Activated T-helper 1 cell treated with anti-CD3 and anti-CD28 coated beads, Interleukin-12 subunit alpha, Interleukin-12 subunit beta, Interleukin-2, Interleukin-4 antibody, amounts not matched to agents 30 ng/mL and 10 ng/mL and 1 ng/mL, durations not matched to agents 14 hours and 24 hours and 36 hours (primary cell): ENCODE measurements at regions of chr4 and their contacts with region 1.

Region 1: DNA sequence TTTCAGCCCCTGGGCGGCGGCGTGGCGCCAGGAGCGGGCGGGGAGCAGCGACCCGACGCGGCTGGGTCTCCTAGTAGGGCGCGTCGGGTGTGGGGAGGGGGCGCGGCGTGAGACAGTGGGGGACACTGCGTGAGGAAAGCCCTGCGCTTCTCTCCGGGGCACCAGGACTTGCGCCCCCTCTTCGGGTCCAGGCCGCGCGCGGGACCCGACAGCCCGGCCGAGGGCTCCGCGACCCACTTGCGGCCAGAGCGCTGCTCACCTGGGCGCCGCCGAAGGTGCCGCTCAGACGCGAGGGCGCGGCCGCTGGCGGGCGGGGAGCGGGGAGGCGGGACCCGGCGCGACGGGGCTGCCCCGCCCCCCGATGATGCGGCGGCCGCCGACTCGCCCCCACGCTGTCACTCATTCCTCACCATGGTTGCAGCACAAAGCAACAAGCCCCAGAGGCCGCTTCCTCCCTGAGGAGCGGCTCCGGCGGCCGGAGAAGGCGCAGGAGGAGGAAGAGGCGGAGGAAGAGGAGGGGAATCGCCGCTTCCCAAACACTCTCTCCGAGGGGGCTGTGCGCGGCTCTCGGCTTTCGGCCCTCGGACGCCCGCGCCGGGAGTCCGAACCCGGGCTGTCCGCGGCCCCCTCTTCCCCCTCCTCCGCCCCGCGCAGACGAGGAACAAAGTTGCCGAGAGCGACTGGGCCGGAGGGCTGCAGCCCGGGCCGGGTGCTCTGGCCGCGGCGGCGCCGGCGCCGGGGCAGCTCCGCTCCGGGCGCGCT is at the start of gene RAPGEF2:
- DNase-seq: peak; percentile 86
- H3K4me3 Mint-ChIP-seq: peak within 1 kb of the TSS; percentile 85
- H3K27ac Mint-ChIP-seq: peak within 1 kb of the TSS; percentile 93
- H3K4me1 Mint-ChIP-seq: peaks cover 61% of the 10 kb centered on the region
- H3K27me3 Mint-ChIP-seq: peaks cover 7% of the 10 kb centered on the region
- total RNA-seq, gene RAPGEF2: 27.5 and 28.3 TPM in 2 replicates

Region 2: GRCh38 chr4:158671915-158672806 is 430.6 kb before region 1 on chr4 and contains the start of gene ETFDH:
- intact Hi-C with region 1: loop called (anchors 1 kb)
- DNase-seq: peak; percentile 98
- H3K4me3 Mint-ChIP-seq: peak within 1 kb of the TSS; percentile 99
- H3K27ac Mint-ChIP-seq: peak within 1 kb of the TSS; percentile 96
- H3K4me1 Mint-ChIP-seq: peaks cover 46% of the 10 kb centered on the region
- H3K27me3 Mint-ChIP-seq: peaks cover 2% of the 10 kb centered on the region
- total RNA-seq, gene ETFDH: 19.9 and 21.5 TPM in 2 replicates

Region 3: DNA sequence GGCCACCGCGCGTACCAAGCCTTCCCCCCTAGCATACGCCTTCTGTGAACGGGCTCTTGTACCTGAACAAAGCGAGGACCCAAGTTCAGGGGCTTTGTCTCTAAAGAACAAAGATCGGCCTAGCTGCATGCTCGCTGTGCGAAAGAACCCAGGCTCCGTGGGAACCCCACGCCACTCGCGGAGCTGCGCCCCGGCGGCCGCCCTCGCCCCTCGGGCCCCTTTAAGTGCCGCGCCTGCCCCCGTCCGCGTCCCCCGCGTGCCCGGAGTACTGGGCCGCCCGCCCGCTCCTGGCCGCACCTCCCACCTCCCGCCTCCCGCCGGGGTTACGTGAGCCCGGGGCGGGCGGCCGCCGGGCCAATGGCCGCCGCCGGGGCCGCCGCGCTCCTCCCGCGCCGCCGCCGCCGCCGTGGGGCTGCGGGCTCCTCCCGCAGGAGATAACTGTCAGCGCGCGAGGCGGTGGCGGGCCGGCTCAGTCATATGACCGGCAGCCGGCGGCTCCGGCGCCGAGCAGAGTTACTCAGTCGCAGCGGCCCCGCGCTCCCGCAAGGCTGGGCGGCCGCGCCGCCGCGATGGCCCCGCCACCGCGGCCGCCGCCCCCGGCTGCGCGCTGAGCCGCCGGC is 334.1 kb before region 1 on chr4 and contains the start of gene FNIP2:
- intact Hi-C with region 1: loop called (anchors 2 kb)
- DNase-seq: peak; percentile 76
- H3K4me3 Mint-ChIP-seq: peak within 1 kb of the TSS; percentile 100
- H3K27ac Mint-ChIP-seq: peak within 1 kb of the TSS; percentile 98
- H3K4me1 Mint-ChIP-seq: peaks cover 54% of the 10 kb centered on the region
- H3K27me3 Mint-ChIP-seq: peaks cover 2% of the 10 kb centered on the region
- total RNA-seq, gene FNIP2: 18.8 and 20.4 TPM in 2 replicates

Region 4: GRCh38 chr4:159077702-159078495 is 24.9 kb before region 1 on chr4:
- intact Hi-C with region 1: loop called (anchors 1 kb)
- DNase-seq: no peak
- H3K4me3 Mint-ChIP-seq: peak overlapping the region; percentile 53
- H3K27ac Mint-ChIP-seq: peak overlapping the region; percentile 22
- H3K4me1 Mint-ChIP-seq: peaks cover 24% of the 10 kb centered on the region
- H3K27me3 Mint-ChIP-seq: peaks cover 2% of the 10 kb centered on the region

Region 5: DNA sequence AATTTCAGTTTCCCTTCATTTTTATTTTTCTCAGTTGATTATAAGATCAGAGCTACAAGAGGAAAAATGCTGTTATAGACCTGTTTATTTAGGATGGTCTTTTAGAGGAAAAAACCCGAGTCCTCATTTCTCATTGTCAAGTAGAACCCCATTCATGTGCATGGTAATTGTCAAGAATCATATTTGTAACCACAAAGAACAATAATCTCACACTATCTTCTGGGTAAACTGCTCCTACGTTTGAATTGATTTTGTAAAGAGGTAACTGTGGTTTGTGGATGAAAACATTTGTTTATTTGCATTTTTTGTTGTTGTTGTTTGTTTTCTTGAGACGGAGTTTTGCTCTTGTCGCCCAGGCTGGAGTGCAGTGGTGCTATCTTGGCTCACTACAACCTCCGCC is 23.9 kb after region 1 on chr4:
- intact Hi-C with region 1: loop called (anchors 2 kb)
- DNase-seq: no peak
- H3K4me3 Mint-ChIP-seq: peak overlapping the region; percentile 42
- H3K27ac Mint-ChIP-seq: peak overlapping the region; percentile 73
- H3K4me1 Mint-ChIP-seq: peaks cover 40% of the 10 kb centered on the region
- H3K27me3 Mint-ChIP-seq: peaks cover 1% of the 10 kb centered on the region

Region 6: DNA sequence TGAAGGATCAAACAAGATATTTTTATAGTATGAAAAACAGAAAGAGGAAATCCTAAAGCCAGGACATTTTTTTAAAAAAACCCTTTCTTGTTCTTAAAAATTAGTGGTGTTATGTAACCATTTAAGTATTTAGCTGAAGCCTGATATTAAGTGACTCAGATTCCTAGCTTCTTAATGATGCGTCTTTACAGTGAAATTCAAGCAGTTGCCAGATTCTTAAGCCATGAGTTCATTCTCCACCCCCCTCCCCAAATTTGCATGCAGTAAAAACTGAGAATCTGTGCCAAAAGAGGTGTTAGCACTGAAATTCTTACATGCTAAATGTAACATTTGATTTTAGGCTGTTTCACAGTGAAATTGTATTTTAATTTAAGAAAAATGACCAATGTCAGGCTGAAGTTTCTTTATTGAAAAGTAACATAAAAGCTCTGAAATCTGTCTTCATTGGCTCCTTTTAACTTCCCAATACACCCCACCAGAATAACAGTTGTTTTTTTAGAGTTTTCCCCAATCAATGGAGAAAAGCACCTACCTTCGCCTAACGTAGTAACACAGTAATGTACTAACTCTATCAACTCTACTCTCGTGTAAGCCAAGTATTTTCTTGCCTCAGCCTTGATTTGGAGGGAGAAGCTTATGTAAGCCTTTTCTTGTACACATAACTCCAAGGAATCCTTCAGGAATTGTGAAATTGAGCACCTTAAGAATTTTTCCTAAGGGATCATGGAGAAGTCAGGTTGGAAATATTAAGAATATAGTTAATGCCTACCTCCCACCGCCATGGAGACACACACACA is 181.1 kb after region 1 on chr4:
- intact Hi-C with region 1: no loop called
- DNase-seq: no peak
- H3K4me3 Mint-ChIP-seq: no peak overlapping the region
- H3K27ac Mint-ChIP-seq: no peak overlapping the region
- H3K4me1 Mint-ChIP-seq: no peaks in the 10 kb centered on the region
- H3K27me3 Mint-ChIP-seq: no peaks in the 10 kb centered on the region

Region 7: GRCh38 chr4:159446266-159446976 is 343.6 kb after region 1 on chr4:
- intact Hi-C with region 1: loop called (anchors 10 kb)
- DNase-seq: peak; percentile 10
- H3K4me3 Mint-ChIP-seq: no peak overlapping the region
- H3K27ac Mint-ChIP-seq: peak overlapping the region; percentile 35
- H3K4me1 Mint-ChIP-seq: no peaks in the 10 kb centered on the region
- H3K27me3 Mint-ChIP-seq: peaks cover 6% of the 10 kb centered on the region

Region 8: GRCh38 chr4:159900562-159900961 is 797.8 kb after region 1 on chr4:
- intact Hi-C with region 1: no loop called
- DNase-seq: no peak
- H3K4me3 Mint-ChIP-seq: no peak overlapping the region
- H3K27ac Mint-ChIP-seq: no peak overlapping the region
- H3K4me1 Mint-ChIP-seq: no peaks in the 10 kb centered on the region
- H3K27me3 Mint-ChIP-seq: no peaks in the 10 kb centered on the region